PC-9 (cell line): ENCODE measurements at regions of chr17 and their contacts with region 1.

Region 1: GRCh38 chr17:16353317-16354174 is at the start of gene CENPV:
- DNase-seq: no peak
- H3K4me3 ChIP-seq: peak within 1 kb of the TSS; percentile 73
- H3K27ac ChIP-seq: no peak within 1 kb of the TSS
- H3K4me1 ChIP-seq: peaks cover 10% of the 10 kb centered on the region
- H3K27me3 ChIP-seq: no peaks in the 10 kb centered on the region
- CTCF ChIP-seq: no peak
- total RNA-seq, gene CENPV: 12.6 and 18.1 TPM in 2 replicates

Region 2: GRCh38 chr17:16027708-16028584 is 325.6 kb before region 1 on chr17:
- CTCF ChIA-PET with region 1: no interaction called
- POLR2A ChIA-PET with region 1: interaction called, 41 read pairs
- intact Hi-C with region 1: no loop called
- DNase-seq: peak; percentile 45 to 88
- H3K4me3 ChIP-seq: no peak overlapping the region
- H3K27ac ChIP-seq: peak overlapping the region; percentile 97
- H3K4me1 ChIP-seq: peaks cover 25% of the 10 kb centered on the region
- H3K27me3 ChIP-seq: no peaks in the 10 kb centered on the region
- CTCF ChIP-seq: no peak

Region 3: DNA sequence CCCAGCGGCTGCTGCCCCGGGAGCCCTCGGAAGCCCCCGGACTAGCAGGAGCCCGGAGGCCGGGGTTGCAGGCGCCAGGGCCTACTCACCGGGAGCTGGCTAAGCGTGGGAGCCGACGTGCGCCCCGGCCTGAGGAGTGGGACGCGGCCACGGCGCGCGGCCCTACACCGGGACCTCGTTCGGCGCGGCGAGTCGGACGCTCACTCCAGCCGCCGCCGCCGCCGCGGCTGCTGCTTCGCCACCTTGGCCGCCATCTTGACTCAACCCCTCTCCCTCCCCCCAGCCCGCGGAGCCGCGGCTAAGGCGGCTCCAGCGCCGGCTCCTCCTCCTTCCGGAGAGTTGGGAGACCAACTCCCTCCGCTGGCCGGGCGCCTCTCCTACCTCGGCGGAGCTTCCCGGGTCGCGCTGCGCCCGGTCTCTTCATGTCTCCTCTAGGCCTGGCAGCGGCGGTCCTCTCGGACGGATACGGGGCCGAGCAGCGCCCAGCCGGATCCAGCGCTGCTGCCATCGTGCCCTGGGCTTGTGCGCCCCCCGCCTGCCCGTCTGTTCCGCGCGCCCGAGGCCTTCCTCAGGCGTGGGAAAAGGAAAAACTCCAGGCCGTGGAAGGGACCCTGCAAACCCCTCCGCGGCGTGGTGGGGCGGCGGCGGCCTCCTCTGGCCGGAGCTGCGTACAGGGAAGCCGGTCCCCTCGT is 138.1 kb before region 1 on chr17 and contains the start of gene NCOR1:
- CTCF ChIA-PET with region 1: no interaction called
- POLR2A ChIA-PET with region 1: no interaction called
- intact Hi-C with region 1: loop called (anchors 5 kb)
- DNase-seq: peak; percentile 73 to 93
- H3K4me3 ChIP-seq: peak within 1 kb of the TSS; percentile 92
- H3K27ac ChIP-seq: peak within 1 kb of the TSS; percentile 90
- H3K4me1 ChIP-seq: peaks cover 23% of the 10 kb centered on the region
- H3K27me3 ChIP-seq: no peaks in the 10 kb centered on the region
- CTCF ChIP-seq: no peak; the same call in 1 of the 2 replicates
- total RNA-seq, gene NCOR1: 139 and 171 TPM in 2 replicates

Region 4: GRCh38 chr17:16419074-16419928 is 65.8 kb after region 1 on chr17:
- CTCF ChIA-PET with region 1: no interaction called
- POLR2A ChIA-PET with region 1: interaction called, 21 read pairs
- intact Hi-C with region 1: no loop called
- DNase-seq: peak; percentile 66 to 81
- H3K4me3 ChIP-seq: peak overlapping the region; percentile 22; the same call in 1 of the 2 replicates
- H3K27ac ChIP-seq: peak overlapping the region; percentile 71
- H3K4me1 ChIP-seq: peaks cover 38% of the 10 kb centered on the region
- H3K27me3 ChIP-seq: no peaks in the 10 kb centered on the region
- CTCF ChIP-seq: no peak

Region 5: DNA sequence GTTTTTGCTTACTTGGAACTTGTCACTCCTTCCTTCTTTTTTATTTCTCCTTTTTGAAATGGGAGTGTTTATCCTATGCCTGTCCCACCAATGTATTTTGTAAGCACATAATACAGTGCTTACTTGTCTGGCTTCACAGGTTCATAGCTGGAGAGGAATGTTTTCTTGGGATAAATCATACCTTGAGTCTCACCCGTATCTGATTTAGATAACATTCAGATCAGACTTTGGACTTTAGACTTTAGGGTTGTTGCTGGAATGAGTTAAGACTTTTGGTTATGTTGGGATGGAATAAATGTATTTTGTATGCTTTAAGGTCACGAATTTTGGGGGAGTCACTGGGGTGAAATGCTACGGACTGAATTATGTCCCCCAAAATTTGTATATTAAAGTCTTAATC is 151.4 kb after region 1 on chr17:
- CTCF ChIA-PET with region 1: no interaction called
- POLR2A ChIA-PET with region 1: no interaction called
- intact Hi-C with region 1: no loop called
- DNase-seq: no peak
- H3K4me3 ChIP-seq: no peak overlapping the region
- H3K27ac ChIP-seq: no peak overlapping the region
- H3K4me1 ChIP-seq: no peaks in the 10 kb centered on the region
- H3K27me3 ChIP-seq: no peaks in the 10 kb centered on the region
- CTCF ChIP-seq: no peak

Region 6: DNA sequence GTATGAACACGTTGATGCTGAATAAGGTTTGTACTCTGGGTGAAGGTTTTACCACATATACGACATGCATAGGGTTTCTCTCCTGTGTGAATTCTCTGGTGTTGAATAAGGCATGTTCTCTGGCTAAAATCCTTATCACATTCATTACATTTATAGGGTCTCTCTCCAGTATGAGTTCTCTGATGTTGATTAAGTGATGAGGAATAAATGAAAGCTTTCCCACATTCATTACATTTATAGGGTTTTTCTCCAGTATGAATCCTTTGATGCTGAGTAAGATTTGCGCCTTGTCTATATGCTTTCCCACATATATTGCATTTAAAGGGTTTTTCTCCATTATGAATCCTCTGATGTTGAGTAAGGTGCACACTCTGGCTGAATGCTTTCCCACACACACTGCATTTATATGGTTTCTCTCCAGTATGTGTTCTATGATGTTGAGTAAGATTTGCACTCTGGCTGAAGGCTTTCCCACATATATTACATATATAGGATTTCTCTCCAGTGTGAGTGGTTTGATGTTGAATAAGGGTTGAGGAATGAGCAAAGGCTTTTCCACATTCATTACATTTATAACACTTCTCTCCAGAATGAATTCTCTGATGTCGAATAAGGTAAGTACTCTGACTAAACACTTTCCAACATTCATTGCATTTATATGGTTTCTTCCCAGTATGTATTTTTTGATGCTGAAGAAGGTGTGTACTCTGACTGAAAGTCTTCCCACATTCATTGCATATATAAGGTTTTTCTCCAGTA is 198.5 kb after region 1 on chr17:
- CTCF ChIA-PET with region 1: no interaction called
- POLR2A ChIA-PET with region 1: no interaction called
- intact Hi-C with region 1: no loop called
- DNase-seq: no peak
- H3K4me3 ChIP-seq: no peak overlapping the region
- H3K27ac ChIP-seq: no peak overlapping the region
- H3K4me1 ChIP-seq: no peaks in the 10 kb centered on the region
- H3K27me3 ChIP-seq: no peaks in the 10 kb centered on the region
- CTCF ChIP-seq: no peak

Region 7: DNA sequence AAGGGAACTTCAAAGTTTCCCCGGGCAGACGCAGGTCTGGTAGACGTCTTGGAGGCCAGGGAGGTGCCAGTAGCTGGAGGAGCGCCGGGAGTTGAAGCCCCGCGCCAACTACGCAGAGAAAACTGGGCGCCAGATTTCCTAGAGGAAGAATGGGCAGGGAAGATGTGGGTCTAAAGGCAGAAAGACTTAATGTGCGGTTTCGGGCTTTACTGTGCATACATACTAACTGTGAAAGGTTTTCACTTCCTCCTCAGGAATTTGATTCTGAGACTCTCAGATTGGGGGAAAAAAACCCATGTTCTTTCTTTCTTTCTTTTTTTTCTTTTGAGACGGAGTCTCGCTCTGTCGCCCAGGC is 215.8 kb after region 1 on chr17:
- CTCF ChIA-PET with region 1: no interaction called
- POLR2A ChIA-PET with region 1: no interaction called
- intact Hi-C with region 1: no loop called
- DNase-seq: no peak
- H3K4me3 ChIP-seq: no peak overlapping the region
- H3K27ac ChIP-seq: no peak overlapping the region
- H3K4me1 ChIP-seq: no peaks in the 10 kb centered on the region
- H3K27me3 ChIP-seq: peaks cover 4% of the 10 kb centered on the region; the same call in 1 of the 2 replicates
- CTCF ChIP-seq: no peak